Sigmoid colon (tissue), 7 donors: ENCODE measurements at regions of chr5 and their contacts with region 1.

Region 1: GRCh38 chr5:59682542-59682941 is 211.0 kb downstream of the PDE4D start:
- DNase-seq: no peak
- H3K4me3 ChIP-seq: no peak overlapping the region
- H3K27ac ChIP-seq: peak overlapping the region in 2 of 4 donors; percentile 45 to 57
- H3K4me1 ChIP-seq: peaks cover 0 to 55% (median 32%) of the 10 kb centered on the region in 4 donors
- H3K27me3 ChIP-seq: no peaks in the 10 kb centered on the region
- CTCF ChIP-seq: no peak
- EP300 ChIP-seq: no peak
- POLR2A ChIP-seq: no peak

Region 2: DNA sequence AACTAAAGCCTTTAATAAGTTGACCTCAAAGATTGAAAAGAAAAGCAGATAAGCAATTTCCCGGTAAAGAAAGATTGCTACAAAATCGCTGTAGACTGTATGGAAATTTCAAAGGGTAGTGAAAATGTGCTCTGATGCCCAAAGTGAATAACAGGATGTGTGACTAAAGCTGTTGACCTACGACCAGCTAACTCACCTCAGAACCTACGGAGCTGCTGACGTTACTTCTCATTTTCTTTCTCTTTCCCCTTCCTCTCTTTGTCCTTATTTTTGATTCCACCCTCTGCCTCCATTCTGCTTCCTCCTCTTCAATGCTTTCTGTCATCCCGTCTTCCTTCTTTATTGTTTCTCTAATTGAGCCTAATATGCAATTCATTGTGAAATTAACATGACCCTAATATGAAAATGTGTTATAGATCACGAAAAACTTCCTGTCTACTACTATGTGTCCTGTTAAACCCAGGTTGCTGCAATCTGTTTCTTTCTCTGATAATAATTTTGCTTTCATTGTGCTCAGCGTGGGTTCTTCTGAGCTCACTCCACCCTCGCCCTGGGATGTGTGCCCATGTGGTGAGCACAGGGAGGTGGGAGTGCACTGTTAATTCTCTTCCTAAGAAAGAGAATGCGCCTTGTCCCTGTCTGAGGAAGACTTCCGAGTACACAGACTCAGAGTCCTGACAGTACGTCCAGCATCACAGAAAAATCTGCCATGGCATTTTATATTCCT is 108.0 kb after region 1 on chr5:
- intact Hi-C with region 1: loop called (anchors 2 kb)
- DNase-seq: peak; percentile 78
- H3K4me3 ChIP-seq: peak overlapping the region in 3 of 4 donors; percentile 12 to 26 (median 22)
- H3K27ac ChIP-seq: peak overlapping the region; percentile 38 to 85 (median 76)
- H3K4me1 ChIP-seq: peaks cover 0 to 76% (median 65%) of the 10 kb centered on the region in 4 donors
- H3K27me3 ChIP-seq: no peaks in the 10 kb centered on the region
- CTCF ChIP-seq: no peak
- EP300 ChIP-seq: no peak
- POLR2A ChIP-seq: no peak